ENCODE measurements at regions of chr1 and their contacts with region 1.

Region 1: GRCh38 chr1:54499360-54500106 is 48.5 kb upstream of the ACOT11 start:
- DNase-seq: peak; percentile 44 to 62 (median 53)
- ATAC-seq: peak; percentile 73
- H3K4me3 ChIP-seq: no peak overlapping the region
- H3K27ac ChIP-seq: no peak overlapping the region
- H3K4me1 ChIP-seq: peaks cover 16% of the 10 kb centered on the region
- H3K27me3 ChIP-seq: no peaks in the 10 kb centered on the region
- CTCF ChIP-seq: peak; percentile 19 to 57 (median 31)
- POLR2A ChIP-seq: no peak

Region 2: GRCh38 chr1:54309631-54310366 is 189.7 kb before region 1 on chr1:
- intact Hi-C with region 1: loop called (anchors 10 kb)
- DNase-seq: no peak
- ATAC-seq: no peak
- H3K4me3 ChIP-seq: no peak overlapping the region
- H3K27ac ChIP-seq: no peak overlapping the region
- H3K4me1 ChIP-seq: peaks cover 10% of the 10 kb centered on the region
- H3K27me3 ChIP-seq: no peaks in the 10 kb centered on the region
- CTCF ChIP-seq: no peak
- POLR2A ChIP-seq: no peak

Measured in body of pancreas (tissue), 4 donors.